ENCODE measurements at regions of chr1 and their contacts with region 1.

Region 1: DNA sequence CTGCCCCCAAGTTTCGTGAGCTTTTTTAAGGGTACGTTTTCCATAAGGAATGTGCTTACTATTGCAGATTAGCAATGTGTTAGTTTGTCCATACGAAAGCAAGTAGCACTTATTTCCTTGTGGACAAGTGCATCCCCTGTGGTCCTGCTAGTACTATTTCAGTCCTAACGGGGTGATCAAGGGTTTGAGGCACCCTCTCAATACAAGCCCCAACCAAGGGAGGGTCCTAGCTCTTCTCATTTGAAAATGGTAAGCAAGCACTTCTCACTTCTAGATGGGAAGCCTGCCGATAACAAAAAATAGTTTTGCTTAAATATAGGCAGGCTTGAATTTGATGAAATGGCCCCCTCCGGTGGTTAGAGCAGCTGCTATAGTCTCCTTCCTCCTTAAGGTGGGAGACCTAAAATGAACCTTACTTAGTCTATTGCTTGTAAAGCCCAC is 64.0 kb upstream of the HMCN1 start:
- DNase-seq: no peak
- H3K4me3 ChIP-seq: no peak overlapping the region
- CTCF ChIP-seq: peak; percentile 48

Region 2: DNA sequence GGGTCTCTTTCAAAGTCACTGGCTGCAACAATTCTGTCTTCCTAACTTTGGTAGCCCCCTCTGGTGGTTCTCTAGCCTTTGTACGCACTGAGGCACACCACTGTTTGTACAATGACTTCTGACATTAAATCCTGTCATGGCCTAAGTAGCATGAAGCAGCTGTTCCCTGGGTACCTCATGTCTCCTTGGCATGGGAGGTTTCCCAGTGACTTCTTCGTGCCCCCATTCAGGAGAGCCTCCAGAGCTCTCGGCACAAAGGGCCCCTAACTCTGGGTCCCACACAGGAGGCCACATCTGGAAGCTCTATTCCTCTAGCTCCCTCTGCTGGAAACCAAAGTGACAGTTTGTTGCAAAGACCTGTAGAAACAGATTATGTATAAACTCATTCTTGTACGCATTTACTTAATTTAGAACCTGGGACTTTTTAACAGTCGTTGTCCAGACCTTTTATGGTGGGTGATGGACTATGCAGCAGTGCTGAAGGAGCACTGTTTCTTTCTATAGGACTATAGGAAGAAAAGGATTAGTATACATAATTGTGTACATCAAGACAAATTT is 499.8 kb before region 1 on chr1:
- CTCF ChIA-PET with region 1: interaction called, 17 read pairs
- POLR2A ChIA-PET with region 1: no interaction called
- DNase-seq: no peak
- H3K4me3 ChIP-seq: no peak overlapping the region
- CTCF ChIP-seq: peak; percentile 63

Region 3: DNA sequence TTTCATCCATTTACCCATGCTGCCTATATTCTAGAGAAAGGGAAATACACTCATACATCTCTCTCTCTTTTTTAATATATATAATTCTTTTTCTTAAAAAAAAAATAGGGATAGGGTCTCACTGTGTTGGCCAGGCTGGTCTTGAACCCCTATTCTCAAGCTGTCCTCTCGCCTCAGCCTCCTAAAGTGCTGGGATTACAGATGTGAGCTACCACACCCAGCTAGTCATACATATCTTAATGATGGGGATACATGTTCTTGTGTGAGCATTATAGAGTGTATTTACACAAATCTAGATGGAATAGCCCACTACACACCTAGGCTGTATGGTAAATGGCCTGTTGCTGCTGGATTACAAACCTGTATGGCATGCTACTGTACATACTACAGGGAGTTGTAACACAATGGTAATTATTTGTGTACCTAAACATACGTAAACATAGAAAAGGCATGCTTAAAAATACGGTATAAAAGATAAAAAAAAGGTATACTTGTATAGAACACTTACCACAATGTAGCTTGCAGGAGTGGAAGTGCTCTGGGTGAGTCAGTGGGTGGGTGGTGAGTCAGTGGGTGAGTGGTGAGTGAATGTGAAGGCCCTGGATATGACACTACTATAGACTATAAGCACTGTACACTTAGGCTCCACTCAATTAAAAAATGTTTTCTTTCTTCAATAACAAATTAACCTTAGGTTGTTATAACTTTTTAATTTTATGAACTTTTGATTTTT is 426.0 kb before region 1 on chr1:
- CTCF ChIA-PET with region 1: interaction called, 49 read pairs
- POLR2A ChIA-PET with region 1: no interaction called
- DNase-seq: peak; percentile 34
- H3K4me3 ChIP-seq: no peak overlapping the region
- CTCF ChIP-seq: no peak

Region 4: DNA sequence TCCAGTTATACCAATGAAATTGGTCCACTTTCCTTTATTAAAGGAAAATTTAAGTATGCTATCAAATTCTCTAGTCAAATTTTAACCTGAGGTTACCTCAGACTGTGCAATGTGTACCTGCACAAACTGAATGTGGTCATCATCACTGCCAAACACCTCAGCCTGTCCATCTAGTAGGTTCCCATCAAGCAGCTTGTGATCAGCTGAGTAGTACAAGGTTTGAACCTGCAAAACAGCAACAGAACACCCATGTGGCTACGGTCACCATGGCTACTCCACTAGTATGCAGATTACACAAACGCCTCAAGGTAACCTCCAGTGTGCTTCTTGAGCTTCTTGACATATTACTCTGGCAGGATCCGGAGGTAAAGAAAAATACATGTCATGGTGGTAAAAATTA is 364.8 kb before region 1 on chr1:
- CTCF ChIA-PET with region 1: interaction called, 21 read pairs
- POLR2A ChIA-PET with region 1: no interaction called
- DNase-seq: no peak
- H3K4me3 ChIP-seq: no peak overlapping the region
- CTCF ChIP-seq: no peak

Region 5: DNA sequence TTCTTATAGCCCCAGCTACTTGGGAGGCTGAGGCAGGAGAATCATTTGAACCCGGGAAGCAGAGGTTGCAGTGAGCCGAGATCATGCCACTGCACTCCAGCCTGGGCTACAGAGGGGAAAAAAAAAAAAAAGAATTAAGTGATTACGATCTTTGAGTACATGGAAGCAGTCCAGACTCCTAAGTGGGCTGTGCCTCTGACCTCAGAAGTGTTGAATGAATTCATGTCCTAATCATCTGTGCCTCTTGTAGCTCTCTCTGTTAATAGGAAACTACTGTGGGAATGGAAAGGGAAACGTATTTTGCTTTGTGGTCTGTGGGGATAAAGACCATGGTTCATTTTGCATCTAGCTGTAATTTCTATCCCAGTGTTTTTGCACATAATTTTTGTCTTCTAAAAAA is 344.8 kb before region 1 on chr1:
- CTCF ChIA-PET with region 1: interaction called, 10 read pairs
- POLR2A ChIA-PET with region 1: no interaction called
- DNase-seq: no peak
- H3K4me3 ChIP-seq: no peak overlapping the region
- CTCF ChIP-seq: no peak

Region 6: GRCh38 chr1:185520188-185520935 is 149.8 kb before region 1 on chr1:
- CTCF ChIA-PET with region 1: no interaction called
- POLR2A ChIA-PET with region 1: no interaction called
- DNase-seq: no peak
- H3K4me3 ChIP-seq: no peak overlapping the region
- CTCF ChIP-seq: no peak

Region 7: DNA sequence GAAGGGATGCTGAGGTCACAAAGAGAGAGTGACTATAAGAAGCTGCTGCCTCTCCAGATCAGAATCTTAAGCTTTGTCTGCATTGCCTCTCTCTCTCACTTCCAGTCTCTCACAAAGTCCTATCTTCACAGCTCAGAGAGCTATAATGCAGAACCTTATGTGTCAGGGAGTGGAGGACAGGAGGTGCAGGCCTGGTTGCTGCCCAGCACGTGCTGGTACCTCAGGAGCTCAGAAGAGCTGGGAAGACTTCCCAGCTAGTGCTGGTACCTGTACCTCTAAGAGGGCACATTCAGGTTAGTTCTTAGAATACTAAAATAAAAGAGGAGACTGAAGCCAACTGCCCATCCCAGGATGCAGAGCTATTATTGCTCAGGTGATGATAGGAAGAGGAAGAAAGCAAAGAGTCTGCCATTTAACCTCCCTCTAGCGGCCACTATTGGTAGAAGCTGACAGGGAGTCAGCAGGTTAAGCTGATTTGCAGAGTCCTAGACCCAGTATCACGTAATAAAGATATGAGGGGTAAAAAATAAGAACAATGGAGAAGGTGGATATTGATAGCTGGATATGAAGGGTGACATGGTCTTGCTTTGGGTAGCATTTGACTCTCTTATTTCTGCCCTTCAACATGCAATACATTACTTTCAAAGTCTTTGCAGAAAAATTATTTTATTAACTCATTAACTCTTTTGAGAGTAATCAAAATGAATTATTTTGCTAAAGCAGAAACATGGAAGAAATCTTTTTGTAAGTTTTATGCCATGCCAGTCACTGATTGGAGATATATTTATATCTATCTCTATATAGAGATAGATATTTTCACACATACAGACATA is 74.2 kb before region 1 on chr1:
- CTCF ChIA-PET with region 1: interaction called, 11 read pairs
- POLR2A ChIA-PET with region 1: no interaction called
- DNase-seq: no peak
- H3K4me3 ChIP-seq: no peak overlapping the region
- CTCF ChIP-seq: peak; percentile 61

Region 8: DNA sequence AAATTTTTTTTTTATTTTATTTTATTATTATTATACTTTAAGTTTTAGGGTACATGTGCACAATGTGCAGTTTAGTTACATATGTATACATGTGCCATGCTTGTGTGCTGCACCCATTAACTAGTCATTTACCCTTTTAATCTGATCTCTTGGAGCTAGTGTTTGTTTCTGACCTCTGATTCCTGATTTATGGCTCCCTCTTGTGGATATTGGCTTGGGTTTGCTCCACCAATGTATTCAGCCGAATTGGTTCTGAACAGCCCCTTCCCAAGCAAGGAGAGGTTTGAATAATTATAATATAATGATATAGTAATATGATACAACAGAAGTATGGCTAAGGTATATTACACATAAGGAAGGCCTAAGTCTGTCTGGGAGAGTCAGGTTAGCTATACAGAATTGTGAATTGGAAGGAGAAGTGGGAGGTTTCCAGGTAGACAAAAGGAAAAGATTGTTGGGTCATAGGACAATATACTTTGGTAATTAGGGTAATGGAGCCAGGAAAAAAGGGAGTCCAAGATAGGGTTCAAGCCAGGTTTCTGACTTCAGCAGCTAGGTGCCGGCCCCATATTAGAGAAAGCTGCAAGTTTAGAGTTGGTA is 10.9 kb after region 1 on chr1:
- CTCF ChIA-PET with region 1: interaction called, 40 read pairs
- POLR2A ChIA-PET with region 1: no interaction called
- DNase-seq: no peak
- H3K4me3 ChIP-seq: no peak overlapping the region
- CTCF ChIP-seq: peak; percentile 49